MCF 10A (cell line): ENCODE measurements at regions of chr3 and their contacts with region 1.

Region 1: DNA sequence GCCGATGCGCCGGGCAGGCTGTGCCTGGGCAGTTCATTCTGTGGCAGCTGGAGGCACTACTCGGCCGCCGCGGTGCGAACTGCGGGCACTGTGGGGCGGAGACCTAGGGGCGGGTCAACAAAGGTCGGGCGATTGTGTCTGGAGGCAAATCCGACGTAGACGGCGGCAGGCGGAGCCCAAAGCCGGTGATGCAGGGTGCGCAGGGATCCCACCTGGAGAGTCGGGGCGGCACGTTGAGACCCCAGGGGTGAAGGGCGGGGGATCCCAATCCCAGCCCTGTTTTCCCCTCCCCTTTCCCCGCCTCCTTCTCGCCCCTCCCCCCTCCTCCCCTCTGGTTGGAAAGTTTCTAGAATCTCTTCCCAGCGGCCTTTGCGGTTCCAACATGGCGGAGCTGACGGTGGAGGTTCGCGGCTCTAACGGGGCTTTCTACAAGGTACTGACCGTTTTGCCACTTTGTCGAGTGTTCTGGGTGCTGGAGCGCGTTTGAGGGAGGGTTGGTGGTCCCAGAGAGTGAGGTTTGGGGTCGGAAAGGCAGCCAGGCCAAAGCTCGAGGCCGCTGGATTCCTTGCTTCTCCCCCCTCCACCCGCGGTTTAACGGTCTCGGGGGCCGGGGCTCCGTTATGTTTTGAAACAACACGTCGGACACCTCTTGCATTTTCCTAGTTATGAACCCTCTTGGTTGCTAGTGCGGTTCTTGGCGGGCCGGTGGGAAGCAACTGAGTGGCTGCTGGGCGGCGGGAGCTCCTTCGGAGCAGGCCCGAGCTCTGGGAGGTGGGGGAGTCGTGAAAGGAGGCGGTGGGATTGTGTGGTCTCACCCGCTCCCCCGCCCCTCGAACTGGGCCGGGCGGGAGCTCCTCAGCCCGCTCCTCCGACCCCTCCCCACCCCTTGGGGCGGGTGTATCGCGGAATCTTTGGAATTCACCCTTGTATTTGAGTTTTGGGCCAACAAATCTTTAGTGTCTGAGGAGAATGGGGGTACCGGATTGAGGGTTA is at the start of gene FXR1:
- DNase-seq: peak; percentile 94
- H3K4me3 Mint-ChIP-seq: peak within 1 kb of the TSS; percentile 87
- H3K27ac Mint-ChIP-seq: peak within 1 kb of the TSS; percentile 95
- H3K4me1 Mint-ChIP-seq: peaks cover 25% of the 10 kb centered on the region
- H3K27me3 Mint-ChIP-seq: no peaks in the 10 kb centered on the region
- CTCF ChIP-seq: peak; percentile 37
- total RNA-seq, gene FXR1: 166 and 194 TPM in 2 replicates

Region 2: GRCh38 chr3:180762875-180763274 is 149.7 kb before region 1 on chr3:
- CTCF ChIA-PET with region 1: interaction called, 4 read pairs
- POLR2A ChIA-PET with region 1: interaction called, 11 read pairs
- intact Hi-C with region 1: no loop called
- DNase-seq: peak; percentile 53
- H3K4me3 Mint-ChIP-seq: peak overlapping the region; percentile 60
- H3K27ac Mint-ChIP-seq: peak overlapping the region; percentile 65
- H3K4me1 Mint-ChIP-seq: peaks cover 16% of the 10 kb centered on the region
- H3K27me3 Mint-ChIP-seq: no peaks in the 10 kb centered on the region
- CTCF ChIP-seq: no peak

Region 3: GRCh38 chr3:180808823-180809575 is 103.6 kb before region 1 on chr3:
- CTCF ChIA-PET with region 1: interaction called, 11 read pairs
- POLR2A ChIA-PET with region 1: interaction called, 10 read pairs
- intact Hi-C with region 1: no loop called
- DNase-seq: no peak
- H3K4me3 Mint-ChIP-seq: no peak overlapping the region
- H3K27ac Mint-ChIP-seq: no peak overlapping the region
- H3K4me1 Mint-ChIP-seq: no peaks in the 10 kb centered on the region
- H3K27me3 Mint-ChIP-seq: no peaks in the 10 kb centered on the region
- CTCF ChIP-seq: no peak

Region 4: DNA sequence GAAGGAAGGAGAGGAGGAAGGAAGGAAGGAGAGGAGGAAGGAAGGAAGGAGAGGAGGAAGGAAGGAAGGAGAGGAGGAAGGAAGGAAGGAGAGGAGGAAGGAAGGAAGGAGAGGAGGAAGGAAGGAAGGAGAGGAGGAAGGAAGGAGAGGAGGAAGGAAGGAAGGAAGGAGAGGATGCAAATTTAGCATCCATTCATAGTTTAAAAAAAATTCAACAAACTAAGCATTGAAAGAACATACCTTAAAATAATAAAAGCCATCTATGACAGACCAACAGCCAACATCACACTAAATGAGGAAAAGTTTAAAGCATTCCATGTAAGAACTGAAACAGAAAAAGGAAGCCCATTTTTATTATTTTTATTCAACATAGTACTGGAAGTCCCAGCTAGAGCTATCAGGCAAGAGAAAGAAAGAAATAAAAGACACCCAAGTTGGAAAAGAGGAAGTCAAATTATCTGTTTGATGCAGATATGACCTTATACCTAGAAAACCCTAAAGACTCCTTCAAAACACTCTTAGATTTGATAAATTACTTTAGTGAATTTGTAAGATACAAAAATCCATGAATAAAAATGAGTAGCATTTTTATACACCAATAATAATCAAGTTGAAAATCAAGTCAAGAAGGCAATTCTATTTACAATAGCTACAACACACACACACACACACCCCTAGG is 52.3 kb before region 1 on chr3:
- CTCF ChIA-PET with region 1: no interaction called
- POLR2A ChIA-PET with region 1: no interaction called
- intact Hi-C with region 1: no loop called
- DNase-seq: no peak
- H3K4me3 Mint-ChIP-seq: no peak overlapping the region
- H3K27ac Mint-ChIP-seq: no peak overlapping the region
- H3K4me1 Mint-ChIP-seq: no peaks in the 10 kb centered on the region
- H3K27me3 Mint-ChIP-seq: no peaks in the 10 kb centered on the region
- CTCF ChIP-seq: no peak

Region 5: GRCh38 chr3:180980611-180981010 is 68.0 kb after region 1 on chr3:
- CTCF ChIA-PET with region 1: interaction called, 3 read pairs
- POLR2A ChIA-PET with region 1: interaction called, 11 read pairs
- intact Hi-C with region 1: no loop called
- DNase-seq: no peak
- H3K4me3 Mint-ChIP-seq: no peak overlapping the region
- H3K27ac Mint-ChIP-seq: no peak overlapping the region
- H3K4me1 Mint-ChIP-seq: no peaks in the 10 kb centered on the region
- H3K27me3 Mint-ChIP-seq: no peaks in the 10 kb centered on the region
- CTCF ChIP-seq: no peak

Region 6: DNA sequence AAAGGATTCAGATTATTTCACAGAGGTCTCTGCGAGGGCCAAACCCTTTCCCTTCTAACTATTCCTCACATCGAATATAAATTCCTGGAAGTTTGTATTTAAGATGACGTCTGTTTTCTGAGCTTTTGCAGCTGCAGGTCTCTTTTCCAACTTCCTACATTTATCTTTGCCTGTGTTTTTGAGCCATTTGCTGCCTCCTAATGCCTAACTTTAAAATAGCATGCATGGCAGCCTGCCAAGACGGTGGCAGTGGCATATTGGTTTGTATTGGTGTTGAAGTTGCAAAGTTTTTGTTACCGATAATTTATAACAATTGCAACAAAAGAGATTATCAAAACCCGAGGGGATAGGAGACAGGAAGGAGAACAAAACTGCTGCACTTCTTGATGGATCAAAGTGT is 264.0 kb after region 1 on chr3:
- CTCF ChIA-PET with region 1: interaction called, 3 read pairs
- POLR2A ChIA-PET with region 1: interaction called, 7 read pairs
- intact Hi-C with region 1: loop called (anchors 2 kb)
- DNase-seq: peak; percentile 77
- H3K4me3 Mint-ChIP-seq: no peak overlapping the region
- H3K27ac Mint-ChIP-seq: no peak overlapping the region
- H3K4me1 Mint-ChIP-seq: peaks cover 5% of the 10 kb centered on the region
- H3K27me3 Mint-ChIP-seq: no peaks in the 10 kb centered on the region
- CTCF ChIP-seq: peak; percentile 45